ENCODE measurements at regions of chr12 and their contacts with region 1.

Region 1: DNA sequence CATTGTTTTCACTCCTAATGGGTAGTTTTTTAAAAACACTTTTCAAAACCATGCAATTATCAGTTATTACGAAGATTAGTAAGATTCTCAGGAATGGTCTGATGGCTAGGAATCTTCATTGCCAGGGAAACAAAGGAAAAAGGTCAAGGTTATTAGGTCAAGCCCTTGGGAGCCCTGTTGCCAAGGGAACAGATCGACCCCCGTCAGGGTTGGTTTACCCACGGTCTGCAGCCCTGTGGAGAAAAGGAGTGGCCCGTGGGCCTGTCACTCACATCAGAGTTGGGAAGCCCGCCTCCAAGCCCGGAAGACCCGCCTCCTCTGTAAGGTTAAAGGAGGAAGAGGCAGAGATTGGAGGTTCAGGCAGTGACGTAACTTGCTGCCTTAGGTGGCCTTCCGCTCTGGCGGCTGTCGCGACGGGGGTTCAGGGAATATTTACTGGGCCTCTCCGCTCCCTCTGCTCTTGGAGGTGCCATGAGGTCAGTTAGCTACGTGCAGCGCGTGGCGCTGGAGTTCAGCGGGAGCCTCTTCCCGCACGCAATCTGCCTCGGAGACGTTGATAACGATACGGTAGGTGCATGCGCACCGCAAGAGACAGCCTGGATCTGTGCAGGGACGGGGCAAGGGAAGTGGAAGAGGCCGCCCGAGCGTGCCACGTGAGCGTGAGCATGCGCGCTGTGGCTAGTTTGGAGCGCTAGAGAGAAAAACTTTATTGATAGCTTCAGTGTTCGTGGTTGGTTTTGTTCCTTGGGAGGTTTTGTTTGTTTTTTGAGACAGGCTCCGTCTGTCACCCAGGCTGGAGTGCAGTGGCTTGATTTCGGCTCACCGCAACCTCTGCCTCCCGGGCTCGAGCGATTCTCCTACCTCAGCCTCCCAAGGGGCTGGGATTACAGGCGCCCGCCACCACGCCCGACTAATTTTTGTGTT is at the start of gene ITFG2:
- DNase-seq: peak; percentile 95
- CTCF ChIP-seq: no peak

Region 2: DNA sequence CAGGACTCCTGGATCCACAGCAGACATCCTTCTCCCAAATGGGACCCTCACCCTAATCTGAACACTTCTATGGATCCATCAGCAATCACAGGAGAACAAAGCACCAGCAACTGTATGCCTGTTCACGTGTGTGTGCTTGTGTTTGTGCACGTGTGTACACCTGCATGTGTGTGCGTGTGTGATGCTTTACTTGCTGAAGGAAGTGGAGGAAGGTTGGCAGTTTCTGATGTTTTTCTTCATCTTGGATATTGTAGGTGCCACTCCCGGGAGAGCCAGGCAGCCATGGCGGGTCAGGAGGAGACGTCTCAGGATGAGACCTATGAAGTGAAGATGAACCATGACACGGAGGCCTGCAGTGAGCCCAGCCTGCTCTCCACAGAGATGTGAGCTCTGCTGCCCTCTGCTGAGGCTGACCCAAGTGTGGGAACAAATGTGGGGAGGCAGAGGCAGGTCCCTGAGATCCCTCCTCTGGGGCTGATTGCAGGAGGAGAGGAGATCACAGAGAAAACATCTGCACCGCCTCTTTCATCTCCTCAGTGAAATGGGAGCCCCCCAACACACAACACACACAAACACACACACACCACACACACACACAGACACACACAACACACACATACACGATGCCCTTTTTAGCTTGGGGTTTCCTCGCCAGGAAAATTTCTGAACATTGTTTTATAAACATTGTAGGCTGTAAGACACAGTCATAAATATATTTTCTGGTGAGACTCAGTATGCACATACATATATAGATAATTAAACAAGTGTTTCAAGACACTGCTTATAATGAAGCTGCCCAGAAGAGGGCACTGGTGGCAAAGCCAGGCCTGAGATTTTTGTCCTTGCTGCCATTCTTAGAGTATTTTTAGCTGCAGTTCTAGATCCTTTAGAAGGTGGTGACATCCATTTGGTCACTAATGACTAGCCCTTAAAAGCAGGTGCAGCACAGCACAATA is 130.0 kb before region 1 on chr12:
- CTCF ChIA-PET with region 1: interaction called, 13 read pairs
- POLR2A ChIA-PET with region 1: no interaction called
- DNase-seq: no peak
- CTCF ChIP-seq: peak; percentile 40

Region 3: DNA sequence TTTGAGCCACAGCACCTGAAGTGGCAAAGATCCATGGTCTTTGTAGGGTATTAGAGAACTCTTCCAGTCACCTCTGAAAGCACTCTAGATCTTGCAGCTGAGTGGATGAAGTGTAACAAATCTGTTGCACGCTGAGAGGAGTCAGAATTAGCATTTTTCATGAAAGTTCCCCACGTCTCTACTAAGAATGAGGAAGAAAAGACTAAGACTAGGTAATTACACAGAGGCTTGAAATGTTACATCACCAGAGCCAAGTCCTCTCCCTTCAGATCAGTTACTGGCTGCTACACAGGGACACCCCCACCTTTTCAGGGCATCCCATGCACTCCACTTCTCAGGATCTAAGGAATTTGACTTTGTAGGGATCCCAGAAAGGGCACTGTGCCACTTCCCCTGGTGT is 116.4 kb before region 1 on chr12:
- CTCF ChIA-PET with region 1: no interaction called
- POLR2A ChIA-PET with region 1: no interaction called
- DNase-seq: no peak
- CTCF ChIP-seq: no peak

Region 4: GRCh38 chr12:2794736-2795289 is 17.7 kb before region 1 on chr12 and contains the start of gene FKBP4:
- CTCF ChIA-PET with region 1: interaction called, 16 read pairs
- POLR2A ChIA-PET with region 1: interaction called, 6 read pairs
- DNase-seq: peak; percentile 96
- CTCF ChIP-seq: no peak

Region 5: GRCh38 chr12:2825132-2825531 is 12.6 kb after region 1 on chr12:
- CTCF ChIA-PET with region 1: interaction called, 20 read pairs
- POLR2A ChIA-PET with region 1: no interaction called
- DNase-seq: no peak
- CTCF ChIP-seq: no peak